Posterior vena cava (tissue), 2 donors: ENCODE measurements at regions of chr6 and their contacts with region 1.

Region 1: GRCh38 chr6:11033825-11034224 is 10.3 kb downstream of the ELOVL2 start:
- DNase-seq: no peak

Region 2: GRCh38 chr6:10886691-10887535 is 146.9 kb before region 1 on chr6 and contains the start of gene SYCP2L:
- intact Hi-C with region 1: no loop called
- DNase-seq: no peak
- total RNA-seq, gene SYCP2L: 0.71 to 1.1 TPM

Region 3: GRCh38 chr6:10962673-10963072 is 71.2 kb before region 1 on chr6:
- intact Hi-C with region 1: no loop called
- DNase-seq: no peak

Region 4: DNA sequence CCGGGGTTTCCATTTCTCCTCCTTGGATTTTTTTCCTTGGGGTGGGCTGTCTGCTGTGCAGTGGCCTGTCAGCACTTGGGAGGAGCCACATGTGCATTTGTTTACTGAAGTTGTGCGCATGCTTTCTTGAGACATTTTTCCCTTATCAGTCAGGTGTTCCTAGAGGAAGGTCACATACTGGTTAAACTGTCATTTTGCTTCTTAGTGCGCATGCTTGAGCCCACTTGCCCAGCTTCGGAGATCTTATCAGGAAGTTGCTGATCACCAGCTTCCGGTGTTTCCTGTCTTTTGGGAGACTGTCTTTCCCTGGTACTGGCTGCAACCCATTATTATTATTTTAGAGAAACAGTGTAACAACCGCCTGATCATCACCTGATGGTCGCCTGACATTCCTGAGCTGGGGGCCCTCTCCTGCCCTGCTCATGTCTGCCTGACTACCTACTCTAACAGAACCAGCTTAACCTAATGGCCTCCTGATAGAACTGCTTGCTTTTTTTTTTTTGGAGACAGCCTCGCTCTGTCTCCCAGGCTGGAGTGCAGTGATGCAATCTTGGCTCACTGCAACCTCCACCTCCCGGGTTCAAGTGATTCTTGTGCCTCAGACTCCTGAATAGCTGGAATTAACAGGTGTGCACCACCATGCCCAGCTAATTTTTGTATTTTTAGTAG is 78.1 kb after region 1 on chr6:
- intact Hi-C with region 1: loop called in 1 of 2 experiments (anchors 2 kb)
- DNase-seq: no peak

Region 5: DNA sequence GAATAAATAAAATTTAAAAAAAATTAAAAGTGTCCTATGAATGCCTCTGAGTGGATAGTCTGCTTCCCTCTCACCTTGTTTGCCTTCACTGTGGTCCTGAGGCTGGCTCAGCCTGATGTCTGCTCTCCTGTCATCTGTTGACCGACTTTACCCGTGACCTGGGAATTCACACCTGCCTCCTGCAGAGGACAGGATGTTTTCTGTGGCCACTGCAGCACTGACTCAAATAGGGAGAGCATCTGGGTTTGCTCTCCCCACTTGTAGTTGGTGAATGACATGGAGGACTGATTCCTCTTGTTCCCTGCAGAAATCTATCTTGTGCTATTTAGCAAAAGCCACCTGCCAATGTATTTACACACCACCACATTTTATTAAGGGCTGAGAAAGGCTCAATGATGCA is 130.1 kb after region 1 on chr6:
- intact Hi-C with region 1: no loop called
- DNase-seq: no peak